Common myeloid progenitor, CD34-positive (primary cell): ENCODE measurements at regions of chr22 and their contacts with region 1.

Region 1: DNA sequence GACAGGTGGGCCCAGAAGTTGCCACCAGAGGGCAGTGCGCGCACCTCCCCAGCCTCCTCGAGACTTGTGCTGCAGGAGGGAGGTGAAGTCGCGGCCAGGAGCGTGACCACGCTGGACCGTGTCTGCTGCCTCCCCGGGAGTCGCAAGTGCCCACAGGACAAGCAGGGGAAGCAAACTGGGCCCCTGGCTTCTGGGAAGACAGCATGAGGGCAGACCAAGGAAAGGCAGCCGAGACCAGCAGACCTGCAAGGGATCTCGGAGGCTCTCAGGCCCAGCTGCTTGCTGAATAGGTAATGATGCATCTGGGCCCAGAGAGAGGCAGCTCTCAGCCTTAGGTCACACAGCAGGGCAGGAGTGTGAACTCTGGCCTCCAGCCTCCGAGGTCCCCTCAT is 17.0 kb upstream of the IL2RB start:
- DNase-seq: peak; percentile 69 to 84 (median 73)
- H3K4me3 ChIP-seq: peak overlapping the region in 1 of 7 experiments; percentile 17
- H3K27ac ChIP-seq: no peak overlapping the region
- H3K4me1 ChIP-seq: peaks cover 0 to 35% (median 7%) of the 10 kb centered on the region in 4 experiments
- H3K27me3 ChIP-seq: no peaks in the 10 kb centered on the region

Region 2: GRCh38 chr22:37077884-37078485 is 88.7 kb before region 1 on chr22:
- CTCF ChIA-PET with region 1: no interaction called
- POLR2A ChIA-PET with region 1: no interaction called
- DNase-seq: peak; percentile 58 to 79 (median 72)
- H3K4me3 ChIP-seq: no peak overlapping the region
- H3K27ac ChIP-seq: no peak overlapping the region
- H3K4me1 ChIP-seq: peaks cover 0 to 17% (median 9%) of the 10 kb centered on the region in 4 experiments
- H3K27me3 ChIP-seq: peaks cover 0 to 20% (median 9%) of the 10 kb centered on the region in 5 experiments

Region 3: GRCh38 chr22:37193629-37194191 is 27.0 kb after region 1 on chr22:
- CTCF ChIA-PET with region 1: interaction called, 39 read pairs
- POLR2A ChIA-PET with region 1: no interaction called
- DNase-seq: peak in 2 of 3 donors; percentile 59 to 67
- H3K4me3 ChIP-seq: no peak overlapping the region
- H3K27ac ChIP-seq: no peak overlapping the region
- H3K4me1 ChIP-seq: peaks cover 3 to 34% (median 13%) of the 10 kb centered on the region in 4 experiments
- H3K27me3 ChIP-seq: no peaks in the 10 kb centered on the region

Region 4: GRCh38 chr22:37225481-37225880 is 58.8 kb after region 1 on chr22:
- CTCF ChIA-PET with region 1: no interaction called
- POLR2A ChIA-PET with region 1: no interaction called
- DNase-seq: peak in 1 of 3 donors; percentile 52
- H3K4me3 ChIP-seq: no peak overlapping the region
- H3K27ac ChIP-seq: no peak overlapping the region
- H3K4me1 ChIP-seq: peaks cover under 1 to 83% (median 57%) of the 10 kb centered on the region in 4 experiments
- H3K27me3 ChIP-seq: no peaks in the 10 kb centered on the region

Region 5: DNA sequence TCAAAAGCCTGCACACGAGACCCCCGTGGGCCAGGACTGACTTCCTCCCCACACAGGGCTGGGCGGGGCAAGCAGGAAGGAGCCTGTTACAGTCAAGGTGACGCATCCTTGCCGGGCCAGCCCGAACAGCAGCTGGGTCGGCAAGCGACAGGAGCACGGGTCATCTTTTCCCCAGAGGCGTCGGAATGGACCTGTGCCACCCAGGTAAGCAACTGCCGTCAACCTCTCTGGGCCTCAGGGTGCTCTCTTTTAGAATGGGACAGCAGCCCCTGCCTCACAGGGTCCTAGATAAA is 115.7 kb after region 1 on chr22 and contains the start of gene CYTH4:
- CTCF ChIA-PET with region 1: no interaction called
- POLR2A ChIA-PET with region 1: no interaction called
- DNase-seq: peak; percentile 79 to 91 (median 80)
- H3K4me3 ChIP-seq: peak within 1 kb of the TSS in 6 of 7 experiments; percentile 66 to 92 (median 76)
- H3K27ac ChIP-seq: peak within 1 kb of the TSS; percentile 33 to 62
- H3K4me1 ChIP-seq: peaks cover 32 to 92% (median 72%) of the 10 kb centered on the region in 4 experiments
- H3K27me3 ChIP-seq: no peaks in the 10 kb centered on the region